H1 (cell line): ENCODE measurements at regions of chr7 and their contacts with region 1.

Region 1: GRCh38 chr7:149598721-149599306 is 101.2 kb upstream of the ZNF746 start:
- DNase-seq: peak in 1 of 2 experiments; percentile 56
- H3K4me3 ChIP-seq: no peak overlapping the region
- H3K27ac ChIP-seq: no peak overlapping the region
- H3K4me1 ChIP-seq: no peaks in the 10 kb centered on the region
- H3K27me3 ChIP-seq: no peaks in the 10 kb centered on the region
- CTCF ChIP-seq: peak; percentile 56 to 75 (median 70)
- EP300 ChIP-seq: no peak
- POLR2A ChIP-seq: no peak
- RAD21 ChIP-seq: peak; percentile 74 to 81

Region 2: DNA sequence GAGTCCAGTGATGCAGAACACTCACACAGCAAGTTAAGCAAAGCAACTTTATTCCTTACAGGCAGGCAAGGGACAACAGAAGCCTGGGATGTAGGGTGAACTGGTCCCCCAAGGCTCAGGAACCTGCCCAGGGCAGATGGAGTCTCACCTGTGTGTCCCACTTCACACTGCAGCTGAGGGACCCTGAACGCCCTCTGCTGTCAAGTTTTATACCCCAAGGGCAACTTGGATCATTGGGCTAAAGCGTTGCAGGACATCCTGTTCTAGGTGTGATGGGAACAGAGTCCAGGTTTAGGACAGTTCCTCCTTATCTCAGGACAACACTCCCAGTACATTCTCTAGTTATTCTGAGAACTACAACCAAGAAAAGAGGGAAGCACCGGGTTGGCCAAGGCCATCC is 51.7 kb before region 1 on chr7:
- CTCF ChIA-PET with region 1: interaction called, 14 read pairs
- POLR2A ChIA-PET with region 1: no interaction called
- DNase-seq: no peak
- H3K4me3 ChIP-seq: no peak overlapping the region
- H3K27ac ChIP-seq: no peak overlapping the region
- H3K4me1 ChIP-seq: no peaks in the 10 kb centered on the region
- H3K27me3 ChIP-seq: no peaks in the 10 kb centered on the region; a peak in 1 of 7 replicates
- CTCF ChIP-seq: peak; percentile 25 to 50 (median 33); a peak in 3 of 4 replicates
- EP300 ChIP-seq: no peak
- POLR2A ChIP-seq: no peak
- RAD21 ChIP-seq: peak; percentile 15 to 38; a peak in 3 of 4 replicates

Region 3: DNA sequence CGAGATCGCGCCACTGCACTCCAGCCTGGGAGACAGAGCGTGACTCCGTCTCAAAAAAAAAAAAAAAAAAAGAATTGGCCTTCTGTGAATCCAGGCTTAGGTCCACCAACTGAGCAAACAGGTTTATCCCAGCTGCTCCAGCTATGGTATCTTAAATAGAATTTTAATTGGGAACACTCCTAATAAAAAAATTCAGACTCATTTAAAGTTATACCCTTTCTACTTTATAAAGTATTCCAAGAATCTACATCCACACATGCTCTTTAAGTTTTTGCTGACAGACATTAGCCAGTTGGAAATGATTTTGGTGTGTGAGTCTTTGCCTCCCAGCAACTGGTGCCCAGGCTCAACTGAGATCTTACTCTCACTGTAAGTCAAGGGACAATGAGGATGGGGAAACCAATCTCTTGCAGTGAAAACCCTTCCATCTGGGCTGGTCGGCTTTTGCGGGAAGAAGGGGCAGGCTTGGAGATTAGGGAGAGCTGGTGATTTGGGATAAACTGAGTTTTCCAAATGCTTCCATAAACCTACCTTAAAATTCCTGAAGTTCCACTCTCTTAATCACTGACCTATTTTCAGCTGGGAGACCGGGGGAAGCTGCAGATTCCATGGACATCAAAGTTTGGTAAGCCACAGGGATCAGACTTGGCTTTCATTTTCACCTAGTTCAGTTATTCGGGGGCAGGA is 12.0 kb before region 1 on chr7:
- CTCF ChIA-PET with region 1: interaction called, 29 read pairs
- POLR2A ChIA-PET with region 1: interaction called, 6 read pairs
- DNase-seq: peak in 1 of 2 experiments; percentile 14
- H3K4me3 ChIP-seq: no peak overlapping the region
- H3K27ac ChIP-seq: no peak overlapping the region
- H3K4me1 ChIP-seq: no peaks in the 10 kb centered on the region
- H3K27me3 ChIP-seq: no peaks in the 10 kb centered on the region
- CTCF ChIP-seq: no peak
- EP300 ChIP-seq: no peak
- POLR2A ChIP-seq: no peak
- RAD21 ChIP-seq: no peak